GM12878 (cell line): ENCODE measurements at regions of chr15 and their contacts with region 1.

Region 1: DNA sequence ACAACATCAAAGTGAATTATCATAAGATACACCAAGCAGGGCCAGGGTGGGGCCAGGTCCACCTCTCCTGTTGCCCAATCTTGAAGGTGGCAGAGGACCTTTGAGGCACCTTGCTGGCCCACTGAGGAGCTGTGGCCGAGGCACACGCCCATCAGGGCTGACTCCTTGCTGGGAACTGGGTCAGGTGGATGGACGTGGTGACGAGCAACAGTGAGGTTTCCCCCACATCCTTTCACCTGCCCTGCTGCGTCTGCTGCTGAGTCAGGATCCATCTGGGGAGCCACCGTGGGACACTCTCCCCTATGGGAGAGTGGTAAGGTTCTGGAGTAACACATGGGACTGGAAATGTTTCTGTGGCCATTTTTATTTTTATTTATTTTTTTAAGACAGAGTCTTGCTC is 17.3 kb upstream of the FURIN start:
- DNase-seq: no peak
- ATAC-seq: no peak
- H3K4me3 ChIP-seq: no peak overlapping the region
- H3K27ac ChIP-seq: peak overlapping the region; percentile 32; the same call in 1 of the 2 replicates
- H3K4me1 ChIP-seq: peaks cover 44% of the 10 kb centered on the region
- H3K27me3 ChIP-seq: no peaks in the 10 kb centered on the region
- CTCF ChIP-seq: no peak
- EP300 ChIP-seq: no peak
- POLR2A ChIP-seq: no peak
- RAD21 ChIP-seq: no peak

Region 2: DNA sequence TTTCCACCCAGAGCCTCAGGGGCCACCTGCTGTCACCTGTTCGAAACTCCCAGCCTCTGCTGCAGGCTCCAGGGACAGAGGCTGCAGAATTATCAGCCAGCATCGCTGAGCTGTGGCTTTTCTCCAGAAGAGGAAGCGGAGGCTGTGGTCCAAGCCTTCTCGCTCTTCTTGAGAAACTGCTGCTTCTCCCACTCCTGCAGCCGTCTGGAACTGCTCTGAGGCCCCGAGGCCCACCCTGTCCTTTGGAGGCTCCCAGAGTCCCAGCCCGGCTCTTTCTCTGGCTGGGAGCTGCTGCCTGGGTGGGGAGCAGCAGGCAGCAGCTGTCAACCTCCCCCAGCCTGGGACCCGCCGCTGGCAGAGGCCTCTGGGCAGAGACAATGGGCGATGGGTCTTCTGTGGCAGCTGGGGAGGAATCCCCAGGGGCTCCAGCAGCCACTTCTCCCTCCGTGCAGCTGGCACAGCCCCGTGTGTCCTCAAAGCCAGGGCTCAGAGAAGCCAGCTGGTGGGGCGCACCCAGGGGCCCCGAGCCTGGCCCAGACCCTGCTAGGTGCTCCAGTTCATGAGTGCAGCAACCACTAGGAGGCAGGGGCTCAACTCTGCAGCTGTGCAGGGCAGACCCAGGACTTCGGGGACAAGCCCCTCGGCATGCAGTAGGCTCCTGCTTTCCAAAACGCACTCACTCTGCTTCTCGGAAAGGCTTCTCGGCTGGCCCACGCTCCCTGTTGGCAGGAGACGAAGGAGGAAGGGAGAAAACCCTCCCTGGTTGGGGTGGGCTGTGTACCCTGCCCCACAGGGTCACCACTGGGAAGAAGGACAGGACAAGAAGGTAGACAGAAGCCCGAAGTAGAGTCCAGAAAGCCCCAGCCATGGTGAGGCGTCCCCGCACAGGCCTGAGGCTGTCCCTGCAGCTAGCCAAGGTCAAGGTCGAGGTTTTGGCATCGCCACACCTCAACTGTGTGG is 32.6 kb before region 1 on chr15:
- CTCF ChIA-PET with region 1: interaction called, 4 read pairs
- POLR2A ChIA-PET with region 1: interaction called, 7 read pairs
- RAD21 ChIA-PET with region 1: interaction called, 12 read pairs
- SMC1A ChIA-PET with region 1: interaction called, 5 read pairs
- in situ Hi-C with region 1: no loop called
- intact Hi-C with region 1: no loop called
- DNase-seq: no peak
- ATAC-seq: peak; percentile 71
- H3K4me3 ChIP-seq: no peak overlapping the region
- H3K27ac ChIP-seq: no peak overlapping the region
- H3K4me1 ChIP-seq: peaks cover 25% of the 10 kb centered on the region
- H3K27me3 ChIP-seq: no peaks in the 10 kb centered on the region
- CTCF ChIP-seq: peak; percentile 21 to 38 (median 33); a peak in 3 of 6 replicates
- EP300 ChIP-seq: no peak
- POLR2A ChIP-seq: no peak
- RAD21 ChIP-seq: peak; percentile 63

Region 3: DNA sequence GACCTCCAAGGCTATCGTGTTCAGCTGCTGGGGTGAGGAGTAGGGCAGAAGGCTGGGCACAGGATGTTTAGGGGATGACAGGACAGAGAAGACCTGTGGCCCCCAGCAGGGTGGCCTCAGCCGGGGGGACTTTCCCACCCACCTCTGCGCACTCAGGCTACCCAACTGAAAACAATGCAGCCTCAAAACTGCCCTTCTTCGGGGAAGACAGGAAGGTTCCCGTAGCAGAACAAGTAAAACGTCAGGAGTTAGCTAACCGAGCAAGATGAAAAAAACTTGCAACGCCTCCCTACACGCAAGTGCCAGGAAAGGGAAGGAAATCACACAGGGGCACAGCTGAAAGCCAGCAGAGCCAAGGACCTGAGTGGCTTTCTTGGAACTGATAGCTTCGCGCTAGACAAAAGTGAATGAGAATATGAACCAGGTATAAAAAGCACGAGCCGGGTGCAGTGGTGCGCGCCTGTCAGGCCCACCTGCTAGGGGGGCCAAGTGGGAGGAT is 21.1 kb before region 1 on chr15:
- CTCF ChIA-PET with region 1: interaction called, 4 read pairs
- POLR2A ChIA-PET with region 1: interaction called, 4 read pairs
- RAD21 ChIA-PET with region 1: interaction called, 3 read pairs
- SMC1A ChIA-PET with region 1: interaction called, 10 read pairs
- in situ Hi-C with region 1: no loop called
- intact Hi-C with region 1: no loop called
- DNase-seq: no peak
- ATAC-seq: peak; percentile 96
- H3K4me3 ChIP-seq: peak overlapping the region; percentile 47; the same call in 1 of the 2 replicates
- H3K27ac ChIP-seq: peak overlapping the region; percentile 18; the same call in 1 of the 2 replicates
- H3K4me1 ChIP-seq: peaks cover 9% of the 10 kb centered on the region
- H3K27me3 ChIP-seq: no peaks in the 10 kb centered on the region
- CTCF ChIP-seq: no peak
- EP300 ChIP-seq: no peak; a peak in 1 of 4 replicates
- POLR2A ChIP-seq: no peak
- RAD21 ChIP-seq: no peak

Region 4: GRCh38 chr15:90839187-90840071 is 11.7 kb before region 1 on chr15:
- CTCF ChIA-PET with region 1: interaction called, 6 read pairs
- POLR2A ChIA-PET with region 1: interaction called, 4 read pairs
- RAD21 ChIA-PET with region 1: interaction called, 19 read pairs
- SMC1A ChIA-PET with region 1: interaction called, 19 read pairs
- in situ Hi-C with region 1: no loop called
- intact Hi-C with region 1: no loop called
- DNase-seq: no peak
- ATAC-seq: peak; percentile 84
- H3K4me3 ChIP-seq: peak overlapping the region; percentile 50
- H3K27ac ChIP-seq: peak overlapping the region; percentile 56
- H3K4me1 ChIP-seq: peaks cover 22% of the 10 kb centered on the region
- H3K27me3 ChIP-seq: no peaks in the 10 kb centered on the region
- CTCF ChIP-seq: no peak
- EP300 ChIP-seq: no peak
- POLR2A ChIP-seq: peak; percentile 51
- RAD21 ChIP-seq: no peak